ENCODE measurements at regions of chr2 and their contacts with region 1.

Region 1: DNA sequence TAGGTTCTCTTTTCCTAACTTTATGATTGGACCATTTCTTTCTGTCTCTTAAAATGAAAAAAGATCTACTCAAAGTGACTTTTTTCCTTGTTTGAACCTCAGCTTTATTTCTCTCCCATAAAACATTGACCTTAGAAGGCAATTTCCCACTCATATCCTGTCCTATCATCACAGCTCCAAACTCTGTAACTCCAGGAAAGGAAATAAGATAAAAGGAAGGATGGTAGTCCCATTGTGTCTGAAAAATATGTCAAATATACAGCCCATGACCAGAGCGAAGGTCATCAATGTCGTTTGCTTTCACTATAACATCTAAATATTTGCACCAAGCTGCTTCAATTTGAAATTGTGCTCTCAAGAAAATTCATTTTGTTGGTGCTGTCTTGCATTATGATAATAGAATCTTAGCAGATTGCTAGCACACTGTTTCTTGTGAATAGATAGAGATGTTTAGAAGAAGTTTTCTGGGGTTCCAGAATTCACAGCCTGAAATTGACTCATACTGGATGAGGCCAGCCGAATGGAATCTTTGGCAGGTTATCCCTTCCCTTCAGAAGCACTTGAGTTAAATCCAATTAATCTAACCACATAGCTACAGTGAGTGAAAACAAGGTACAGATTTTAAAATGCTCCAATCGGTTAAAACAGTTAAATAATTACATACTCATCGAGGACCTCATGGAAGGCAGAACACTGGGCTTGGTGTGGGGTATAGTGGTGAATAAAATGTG is 95.1 kb downstream of the CRIM1 start:
- DNase-seq: no peak
- ATAC-seq: peak; percentile 27
- H3K4me3 ChIP-seq: no peak overlapping the region
- H3K27ac ChIP-seq: peak overlapping the region; percentile 17 to 85
- H3K4me1 ChIP-seq: peaks cover 17 to 40% of the 10 kb centered on the region in 2 donors
- H3K27me3 ChIP-seq: no peaks in the 10 kb centered on the region

Region 2: GRCh38 chr2:36413218-36413617 is 37.4 kb before region 1 on chr2:
- intact Hi-C with region 1: loop called in 1 of 2 experiments (anchors 5 kb)
- DNase-seq: no peak
- ATAC-seq: peak; percentile 56
- H3K4me3 ChIP-seq: no peak overlapping the region
- H3K27ac ChIP-seq: peak overlapping the region in 1 of 2 donors; percentile 43
- H3K4me1 ChIP-seq: peaks cover 13 to 28% of the 10 kb centered on the region in 2 donors
- H3K27me3 ChIP-seq: no peaks in the 10 kb centered on the region

Region 3: GRCh38 chr2:36486546-36487044 is 36.0 kb after region 1 on chr2:
- intact Hi-C with region 1: loop called in 1 of 2 experiments (anchors 5 kb)
- DNase-seq: no peak
- ATAC-seq: no peak
- H3K4me3 ChIP-seq: no peak overlapping the region
- H3K27ac ChIP-seq: peak overlapping the region; percentile 69 to 93
- H3K4me1 ChIP-seq: peaks cover 16 to 31% of the 10 kb centered on the region in 2 donors
- H3K27me3 ChIP-seq: no peaks in the 10 kb centered on the region